Activated CD4-positive, alpha-beta T cell treated with anti-CD3 and anti-CD28 coated beads, Interleukin-2, amount 10 ng/mL, durations not matched to agents 7 days and 5 days (primary cell): ENCODE measurements at regions of chr5 and their contacts with region 1.

Region 1: DNA sequence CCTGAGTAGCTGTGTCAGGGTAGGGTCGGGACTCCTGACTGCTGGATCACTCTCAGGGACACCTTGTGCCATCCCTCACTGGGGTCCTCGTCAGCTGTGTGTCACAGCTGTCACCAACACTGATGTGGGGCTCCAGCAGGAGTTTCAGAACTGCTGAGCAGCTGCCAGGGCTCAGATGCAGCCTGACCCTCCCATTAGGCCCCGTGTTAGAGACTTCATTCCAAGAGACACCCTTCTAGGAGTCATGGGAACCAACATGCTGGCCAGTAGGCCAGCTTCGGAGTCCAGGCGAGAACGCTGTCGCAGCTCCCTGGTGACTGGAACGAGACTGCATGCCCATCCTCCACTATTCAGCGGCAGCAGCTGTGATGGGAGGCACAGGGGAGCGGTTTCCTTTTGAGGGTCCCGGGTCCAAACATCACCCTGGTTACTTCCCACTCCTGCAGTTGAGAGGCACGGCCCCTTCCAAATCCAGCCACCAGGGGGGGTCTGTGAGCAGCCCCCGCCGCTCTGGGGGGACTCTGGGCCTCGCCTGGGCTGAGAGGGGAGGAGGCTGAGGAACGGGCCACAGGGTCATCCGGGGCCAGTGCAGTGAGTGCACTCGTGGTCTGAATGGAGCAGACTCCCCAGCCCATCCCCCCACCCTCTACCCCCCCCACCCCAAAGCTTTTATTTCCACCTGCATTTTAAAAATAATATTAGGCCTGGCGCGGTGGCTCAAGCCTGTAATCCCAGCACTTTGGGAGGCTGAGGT is 12.6 kb upstream of the TCF7 start:
- DNase-seq: peak; percentile 67
- H3K4me3 Mint-ChIP-seq: no peak overlapping the region
- H3K27ac Mint-ChIP-seq: peak overlapping the region; percentile 46
- H3K4me1 Mint-ChIP-seq: peaks cover 90% of the 10 kb centered on the region
- H3K27me3 Mint-ChIP-seq: peaks cover 1% of the 10 kb centered on the region

Region 2: DNA sequence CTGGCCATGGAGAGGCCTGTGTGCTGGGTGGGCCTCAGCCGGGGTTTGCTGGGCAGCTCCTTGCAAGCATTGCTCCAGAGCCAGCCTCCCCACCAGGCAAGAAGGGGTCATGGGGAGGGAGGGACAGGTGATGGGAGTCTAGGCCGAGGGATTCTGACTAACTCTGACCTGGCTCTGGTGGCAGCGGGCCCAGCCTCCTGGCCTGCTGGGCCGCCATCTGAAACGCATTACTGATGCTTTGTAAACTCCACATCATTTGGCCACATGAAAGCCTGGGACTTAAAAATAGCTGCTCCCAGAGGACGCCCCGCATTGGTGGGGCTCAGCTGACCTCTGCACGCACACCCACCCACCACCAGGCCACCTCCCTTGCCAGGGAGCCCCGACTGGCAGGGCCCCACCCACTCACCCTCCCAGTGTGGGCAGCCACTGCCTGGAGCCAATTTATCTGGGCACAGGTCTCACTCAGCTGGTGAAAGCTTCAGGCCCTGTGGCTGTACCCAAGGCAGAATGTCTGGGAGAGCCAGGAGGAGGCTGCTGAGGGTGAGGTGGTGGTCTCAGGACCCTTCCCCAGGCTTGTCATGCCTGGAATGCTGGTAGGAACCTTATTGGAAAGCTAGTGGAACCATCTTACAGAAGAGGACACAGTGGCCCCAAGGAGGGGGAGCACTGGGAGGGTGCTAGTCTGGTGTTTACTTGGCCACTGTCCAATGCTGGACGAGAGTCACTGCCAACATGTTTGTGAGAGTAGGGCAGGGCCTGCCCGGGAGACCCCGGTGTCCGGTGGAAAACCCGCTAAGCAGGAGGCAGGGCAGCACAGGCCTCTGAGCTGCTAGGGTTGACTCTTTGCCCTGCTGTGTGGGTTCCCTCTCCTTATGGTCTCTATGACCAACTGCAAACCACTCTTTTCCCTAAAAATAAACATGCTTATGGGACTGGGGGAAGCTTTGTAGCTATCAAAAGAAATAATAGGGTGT is 23.5 kb after region 1 on chr5:
- CTCF ChIA-PET with region 1: interaction called, 18 read pairs
- POLR2A ChIA-PET with region 1: no interaction called
- DNase-seq: no peak
- H3K4me3 Mint-ChIP-seq: peak overlapping the region; percentile 79
- H3K27ac Mint-ChIP-seq: peak overlapping the region; percentile 94
- H3K4me1 Mint-ChIP-seq: peaks cover 98% of the 10 kb centered on the region
- H3K27me3 Mint-ChIP-seq: peaks cover 1% of the 10 kb centered on the region